ENCODE measurements at regions of chr19 and their contacts with region 1.

Region 1: DNA sequence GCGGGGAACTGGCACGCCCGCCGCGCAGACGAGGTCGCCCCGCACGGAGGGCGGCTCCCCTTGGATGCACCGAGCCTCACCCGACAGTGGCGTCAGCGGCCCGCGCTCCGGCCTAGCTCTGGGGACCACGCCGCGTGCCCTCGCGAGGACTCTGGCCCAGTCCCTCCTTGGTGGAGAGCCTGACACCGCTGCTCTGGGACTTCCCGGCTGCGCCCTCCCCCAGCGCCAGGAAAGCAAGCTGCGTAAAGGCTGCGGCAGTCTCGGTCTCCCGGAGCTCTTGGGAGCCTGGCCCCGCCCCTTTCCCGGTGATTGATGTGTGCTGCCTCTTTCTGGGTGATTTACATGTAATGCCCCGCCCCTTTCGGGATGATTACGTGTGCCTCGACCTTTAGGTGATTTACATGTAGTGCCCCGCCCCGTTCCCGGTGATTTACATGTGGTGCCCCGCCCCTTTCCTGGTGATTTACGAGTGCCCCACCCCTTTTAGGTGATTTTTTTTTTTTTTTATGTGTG is at the start of gene LENG9:
- DNase-seq: peak; percentile 100
- ATAC-seq: peak; percentile 69
- H3K4me3 Mint-ChIP-seq: peak within 1 kb of the TSS; percentile 80
- H3K27ac Mint-ChIP-seq: peak within 1 kb of the TSS; percentile 91
- H3K4me1 Mint-ChIP-seq: peaks cover 26% of the 10 kb centered on the region
- H3K27me3 Mint-ChIP-seq: peaks cover 6% of the 10 kb centered on the region
- total RNA-seq, gene LENG9: 5.0 to 5.1 TPM

Region 2: GRCh38 chr19:53977429-53977990 is 486.1 kb before region 1 on chr19:
- CTCF ChIA-PET with region 1: no interaction called
- POLR2A ChIA-PET with region 1: no interaction called
- intact Hi-C with region 1: loop called in 1 of 2 experiments (anchors 1 kb)
- DNase-seq: peak; percentile 79
- ATAC-seq: peak; percentile 61
- H3K4me3 Mint-ChIP-seq: peak overlapping the region; percentile 59
- H3K27ac Mint-ChIP-seq: no peak overlapping the region
- H3K4me1 Mint-ChIP-seq: peaks cover 30% of the 10 kb centered on the region
- H3K27me3 Mint-ChIP-seq: peaks cover 53% of the 10 kb centered on the region

Region 3: GRCh38 chr19:54189735-54190502 is 273.7 kb before region 1 on chr19:
- CTCF ChIA-PET with region 1: interaction called, 3 read pairs
- POLR2A ChIA-PET with region 1: no interaction called
- intact Hi-C with region 1: loop called (anchors 1 kb)
- DNase-seq: peak; percentile 100
- ATAC-seq: peak; percentile 69
- H3K4me3 Mint-ChIP-seq: peak overlapping the region; percentile 76
- H3K27ac Mint-ChIP-seq: peak overlapping the region; percentile 96
- H3K4me1 Mint-ChIP-seq: peaks cover 34% of the 10 kb centered on the region
- H3K27me3 Mint-ChIP-seq: no peaks in the 10 kb centered on the region

Region 4: DNA sequence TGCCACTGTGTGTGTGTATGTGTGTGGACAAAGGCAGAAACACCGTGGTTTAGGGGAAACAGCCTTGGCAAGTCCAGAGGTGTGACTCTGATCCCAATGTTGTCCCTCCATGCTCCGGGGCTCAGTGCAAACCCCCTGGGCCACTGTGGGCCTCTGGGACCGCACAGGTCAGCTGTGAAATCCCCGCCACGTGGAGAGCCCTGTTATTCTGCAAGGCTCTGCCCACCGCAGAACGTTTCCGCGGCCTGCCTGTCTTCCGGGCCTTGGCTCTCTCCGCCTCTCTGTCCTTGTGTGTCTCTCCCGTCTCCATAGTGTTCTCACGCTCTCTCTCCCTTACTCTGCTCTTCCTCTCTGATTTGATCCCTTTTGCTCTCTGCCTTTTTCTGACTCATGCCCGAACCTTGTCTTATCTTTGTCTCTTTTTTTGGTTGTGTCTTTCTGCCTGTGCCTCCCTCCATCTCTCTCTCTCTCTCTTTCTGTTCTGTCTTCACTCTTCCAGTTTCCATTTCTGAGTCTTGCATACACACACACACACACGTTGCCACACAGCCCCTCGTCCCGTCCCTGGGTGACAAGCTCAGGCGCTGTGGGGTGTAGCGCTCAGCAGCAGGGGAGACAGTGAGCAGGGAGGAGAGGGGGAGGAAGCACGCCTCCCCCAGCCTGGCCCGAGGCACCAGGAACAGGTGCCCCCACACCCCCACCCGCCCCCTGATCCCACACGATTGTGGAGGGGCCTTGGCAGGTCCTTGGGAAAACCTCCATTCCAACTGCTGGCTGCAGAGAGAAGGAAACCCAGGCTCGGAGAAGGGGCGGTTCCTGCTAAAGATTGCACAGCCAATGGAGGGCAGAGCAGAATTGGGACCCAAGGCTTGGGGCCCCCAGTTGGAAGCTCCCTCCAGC is 45.3 kb before region 1 on chr19:
- CTCF ChIA-PET with region 1: no interaction called
- POLR2A ChIA-PET with region 1: no interaction called
- intact Hi-C with region 1: no loop called
- DNase-seq: peak; percentile 55
- ATAC-seq: peak; percentile 69
- H3K4me3 Mint-ChIP-seq: no peak overlapping the region
- H3K27ac Mint-ChIP-seq: peak overlapping the region; percentile 44
- H3K4me1 Mint-ChIP-seq: peaks cover 15% of the 10 kb centered on the region
- H3K27me3 Mint-ChIP-seq: peaks cover 46% of the 10 kb centered on the region

Region 5: DNA sequence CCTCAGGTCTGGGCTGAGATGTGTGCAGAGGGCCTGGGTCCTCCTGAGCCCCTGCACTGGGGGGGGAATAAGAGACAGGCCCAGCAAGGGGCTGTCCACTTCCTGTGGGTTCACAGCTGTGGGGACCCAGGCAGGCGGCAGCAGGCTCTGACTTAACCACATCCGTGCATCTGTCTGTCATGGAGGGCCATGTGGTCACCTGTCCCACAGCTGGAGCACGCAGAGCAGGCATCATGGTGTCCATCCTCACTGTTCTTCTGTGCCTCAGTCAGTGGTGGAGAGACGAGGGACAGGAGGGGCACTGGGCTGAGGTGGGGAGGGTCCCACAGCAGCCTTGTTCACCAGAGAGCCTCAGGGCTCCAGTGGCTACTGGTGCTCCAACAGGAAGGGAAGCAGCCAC is 244.4 kb after region 1 on chr19:
- CTCF ChIA-PET with region 1: no interaction called
- POLR2A ChIA-PET with region 1: no interaction called
- intact Hi-C with region 1: no loop called
- DNase-seq: no peak
- ATAC-seq: no peak
- H3K4me3 Mint-ChIP-seq: no peak overlapping the region
- H3K27ac Mint-ChIP-seq: no peak overlapping the region
- H3K4me1 Mint-ChIP-seq: no peaks in the 10 kb centered on the region
- H3K27me3 Mint-ChIP-seq: no peaks in the 10 kb centered on the region

Region 6: GRCh38 chr19:55080968-55081772 is 617.6 kb after region 1 on chr19:
- CTCF ChIA-PET with region 1: no interaction called
- POLR2A ChIA-PET with region 1: no interaction called
- intact Hi-C with region 1: loop called in 1 of 2 experiments (anchors 2 kb)
- DNase-seq: peak; percentile 95
- ATAC-seq: peak; percentile 71
- H3K4me3 Mint-ChIP-seq: peak overlapping the region; percentile 69
- H3K27ac Mint-ChIP-seq: peak overlapping the region; percentile 31
- H3K4me1 Mint-ChIP-seq: peaks cover 22% of the 10 kb centered on the region
- H3K27me3 Mint-ChIP-seq: peaks cover 56% of the 10 kb centered on the region

Region 7: GRCh38 chr19:55476100-55476775 is 1012.7 kb after region 1 on chr19 and contains the start of gene ZNF628:
- CTCF ChIA-PET with region 1: no interaction called
- POLR2A ChIA-PET with region 1: no interaction called
- intact Hi-C with region 1: loop called in 1 of 2 experiments (anchors 1 kb)
- DNase-seq: peak; percentile 99
- ATAC-seq: peak; percentile 96
- H3K4me3 Mint-ChIP-seq: peak within 1 kb of the TSS; percentile 84
- H3K27ac Mint-ChIP-seq: peak within 1 kb of the TSS; percentile 88
- H3K4me1 Mint-ChIP-seq: peaks cover 32% of the 10 kb centered on the region
- H3K27me3 Mint-ChIP-seq: no peaks in the 10 kb centered on the region
- total RNA-seq, gene ZNF628: 5.6 to 6.8 TPM

Region 8: GRCh38 chr19:55653758-55654539 is 1190.4 kb after region 1 on chr19:
- CTCF ChIA-PET with region 1: no interaction called
- POLR2A ChIA-PET with region 1: no interaction called
- intact Hi-C with region 1: loop called in 1 of 2 experiments (anchors 1 kb)
- DNase-seq: peak; percentile 99
- ATAC-seq: peak; percentile 84
- H3K4me3 Mint-ChIP-seq: peak overlapping the region; percentile 86
- H3K27ac Mint-ChIP-seq: peak overlapping the region; percentile 98
- H3K4me1 Mint-ChIP-seq: peaks cover 37% of the 10 kb centered on the region
- H3K27me3 Mint-ChIP-seq: no peaks in the 10 kb centered on the region

Measured in activated CD4-positive, alpha-beta T cell treated with anti-CD3 and anti-CD28 coated beads for 36 hours (primary cell).